ENCODE measurements at regions of chr14 and their contacts with region 1.

Region 1: DNA sequence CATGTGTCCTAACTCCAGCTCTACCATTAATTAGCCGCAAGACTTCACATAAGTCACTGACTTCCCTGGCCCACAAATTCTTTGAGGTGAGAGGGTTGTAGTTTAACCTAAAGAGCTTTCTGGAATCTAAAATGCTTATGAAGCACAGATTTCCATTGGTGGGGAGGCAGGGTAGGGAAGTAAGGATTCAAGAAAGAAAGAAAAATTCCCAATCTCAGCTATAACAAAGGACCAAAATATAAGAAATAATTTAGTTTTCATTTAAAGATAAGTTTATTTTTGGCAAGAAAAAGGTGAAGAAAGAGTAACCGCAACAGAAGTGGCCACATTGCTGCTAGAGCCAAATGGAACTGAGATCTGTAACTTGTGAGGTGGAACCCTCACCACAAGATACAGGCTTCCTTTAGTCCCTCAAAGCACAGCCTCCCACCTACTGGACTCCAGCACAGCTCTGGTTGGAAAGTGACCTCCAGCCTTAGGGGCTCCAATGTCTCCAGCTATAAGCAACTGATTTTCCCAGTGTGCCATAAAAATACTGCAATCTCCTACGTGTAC is 23.6 kb downstream of the DAD1 start:
- DNase-seq: no peak
- H3K4me3 ChIP-seq: no peak overlapping the region
- H3K27ac ChIP-seq: peak overlapping the region; percentile 38 to 64
- H3K4me1 ChIP-seq: peaks cover 0 to 8% of the 10 kb centered on the region in 2 donors
- H3K27me3 ChIP-seq: no peaks in the 10 kb centered on the region
- CTCF ChIP-seq: no peak
- POLR2A ChIP-seq: no peak

Region 2: DNA sequence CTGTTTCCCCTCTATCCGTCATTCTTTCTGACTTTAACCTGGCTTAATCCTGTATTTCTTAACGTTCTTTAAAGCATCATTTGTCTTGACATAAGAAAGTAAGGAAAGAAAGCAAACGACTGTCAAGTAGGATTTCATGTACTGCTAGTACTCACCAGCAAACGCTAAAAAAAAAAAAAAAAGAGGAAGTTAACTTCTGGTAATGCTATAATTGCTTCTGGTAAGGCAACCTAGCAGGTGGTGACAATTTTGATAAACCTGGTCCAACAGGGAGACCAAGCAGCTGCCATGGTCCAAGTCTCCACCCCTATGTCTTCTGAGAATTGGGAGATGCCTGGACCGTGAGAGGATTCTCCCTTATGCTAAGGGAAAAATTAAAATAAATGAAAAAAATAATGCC is 283.1 kb before region 1 on chr14:
- intact Hi-C with region 1: no loop called
- DNase-seq: no peak
- H3K4me3 ChIP-seq: no peak overlapping the region
- H3K27ac ChIP-seq: no peak overlapping the region
- H3K4me1 ChIP-seq: no peaks in the 10 kb centered on the region
- H3K27me3 ChIP-seq: no peaks in the 10 kb centered on the region
- CTCF ChIP-seq: no peak
- POLR2A ChIP-seq: no peak

Region 3: DNA sequence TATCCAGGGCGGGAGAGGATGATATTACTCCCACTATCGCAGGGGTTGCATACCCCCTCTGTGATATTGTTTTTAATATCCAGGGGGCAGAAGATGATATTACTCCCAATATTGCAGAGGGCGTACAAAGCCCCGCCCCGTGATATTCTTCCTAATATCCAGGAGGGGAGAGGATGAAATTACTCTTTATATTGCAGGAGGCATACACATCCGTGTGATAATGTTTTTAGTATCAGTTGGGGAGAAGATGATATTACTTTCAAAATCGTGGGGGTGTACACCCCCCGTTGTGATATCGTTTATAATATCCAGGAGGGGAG is 148.1 kb after region 1 on chr14:
- intact Hi-C with region 1: loop called (anchors 5 kb)
- DNase-seq: no peak
- H3K4me3 ChIP-seq: no peak overlapping the region
- H3K27ac ChIP-seq: no peak overlapping the region
- H3K4me1 ChIP-seq: no peaks in the 10 kb centered on the region
- H3K27me3 ChIP-seq: no peaks in the 10 kb centered on the region
- CTCF ChIP-seq: no peak
- POLR2A ChIP-seq: no peak

Measured in uterus (tissue), 4 donors.